ENCODE measurements at regions of chr6 and their contacts with region 1.

Region 1: GRCh38 chr6:13336553-13336952 is 8.2 kb upstream of the TBC1D7 start:
- DNase-seq: peak; percentile 73 to 82
- H3K4me3 ChIP-seq: no peak overlapping the region
- H3K4me3 Mint-ChIP-seq: no peak overlapping the region
- H3K27ac Mint-ChIP-seq: no peak overlapping the region
- H3K4me1 ChIP-seq: peaks cover 6% of the 10 kb centered on the region; the same call in 1 of the 2 replicates
- H3K4me1 Mint-ChIP-seq: peaks cover 9% of the 10 kb centered on the region
- H3K27me3 ChIP-seq: no peaks in the 10 kb centered on the region
- H3K27me3 Mint-ChIP-seq: no peaks in the 10 kb centered on the region
- CTCF ChIP-seq: peak; percentile 77 to 88

Region 2: DNA sequence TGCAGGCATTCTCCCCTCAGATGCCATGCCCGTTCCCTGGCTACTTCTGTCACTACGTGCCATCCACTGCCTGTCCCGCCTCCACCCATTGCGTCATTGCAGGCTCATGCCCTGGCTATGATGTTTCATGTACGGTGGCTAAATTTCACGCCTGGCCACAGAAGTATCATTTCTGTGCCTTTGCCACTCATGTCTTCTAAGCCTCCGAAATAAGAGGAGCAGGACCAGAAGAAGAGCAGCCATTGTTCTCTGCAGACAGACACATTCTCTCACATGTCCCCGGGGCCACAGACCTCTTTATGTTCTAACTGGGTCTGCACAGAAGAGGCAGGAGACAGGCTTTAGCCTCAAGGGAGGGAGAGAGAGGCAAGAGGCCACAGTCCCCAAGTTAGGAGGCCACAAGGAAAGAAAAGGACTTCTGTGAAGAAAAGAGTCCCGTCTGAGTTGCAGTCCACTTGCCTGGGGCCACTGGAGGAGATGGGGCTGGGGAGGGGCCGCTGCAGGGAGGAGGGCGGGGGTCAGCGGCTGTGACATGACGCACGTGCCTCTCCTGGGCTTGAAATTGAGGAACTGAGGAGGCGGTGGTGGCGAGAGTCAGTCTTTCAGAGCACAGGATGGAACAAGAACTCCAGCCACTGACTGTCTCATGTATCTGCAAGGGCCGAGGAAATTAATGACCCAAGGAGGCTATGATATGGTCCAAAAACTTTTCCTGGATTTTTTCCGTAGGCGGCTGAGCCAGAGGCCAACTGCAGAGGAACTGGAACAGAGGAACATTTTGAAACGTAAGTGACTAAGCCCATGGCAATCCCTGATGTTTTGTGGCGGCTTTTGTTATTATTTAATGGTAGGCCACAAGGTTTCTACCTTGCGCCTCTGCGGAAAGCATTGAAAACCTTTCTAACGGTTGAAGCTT is 64.2 kb before region 1 on chr6:
- CTCF ChIA-PET with region 1: no interaction called
- POLR2A ChIA-PET with region 1: no interaction called
- intact Hi-C with region 1: no loop called
- DNase-seq: no peak
- H3K4me3 ChIP-seq: no peak overlapping the region
- H3K4me3 Mint-ChIP-seq: peak overlapping the region; percentile 6
- H3K27ac Mint-ChIP-seq: no peak overlapping the region
- H3K4me1 ChIP-seq: peaks cover 47% of the 10 kb centered on the region
- H3K4me1 Mint-ChIP-seq: peaks cover 35% of the 10 kb centered on the region
- H3K27me3 ChIP-seq: no peaks in the 10 kb centered on the region
- H3K27me3 Mint-ChIP-seq: no peaks in the 10 kb centered on the region
- CTCF ChIP-seq: no peak

Region 3: GRCh38 chr6:13538084-13538483 is 201.5 kb after region 1 on chr6:
- CTCF ChIA-PET with region 1: no interaction called
- POLR2A ChIA-PET with region 1: no interaction called
- intact Hi-C with region 1: loop called (anchors 1 kb)
- DNase-seq: peak in 1 of 2 experiments; percentile 23
- H3K4me3 ChIP-seq: no peak overlapping the region
- H3K4me3 Mint-ChIP-seq: no peak overlapping the region
- H3K27ac Mint-ChIP-seq: no peak overlapping the region
- H3K4me1 ChIP-seq: no peaks in the 10 kb centered on the region
- H3K4me1 Mint-ChIP-seq: no peaks in the 10 kb centered on the region
- H3K27me3 ChIP-seq: no peaks in the 10 kb centered on the region
- H3K27me3 Mint-ChIP-seq: no peaks in the 10 kb centered on the region
- CTCF ChIP-seq: peak; percentile 18 to 27

Region 4: GRCh38 chr6:13614926-13615798 is 278.6 kb after region 1 on chr6 and contains the start of gene NOL7:
- CTCF ChIA-PET with region 1: no interaction called
- POLR2A ChIA-PET with region 1: no interaction called
- intact Hi-C with region 1: loop called (anchors 1 kb)
- DNase-seq: peak; percentile 97 to 98
- H3K4me3 ChIP-seq: peak within 1 kb of the TSS; percentile 87
- H3K4me3 Mint-ChIP-seq: peak within 1 kb of the TSS; percentile 100
- H3K27ac Mint-ChIP-seq: peak within 1 kb of the TSS; percentile 98
- H3K4me1 ChIP-seq: no peaks in the 10 kb centered on the region; the same call in 1 of the 2 replicates
- H3K4me1 Mint-ChIP-seq: peaks cover 7% of the 10 kb centered on the region
- H3K27me3 ChIP-seq: no peaks in the 10 kb centered on the region
- H3K27me3 Mint-ChIP-seq: no peaks in the 10 kb centered on the region
- CTCF ChIP-seq: peak; percentile 70 to 91
- total RNA-seq, gene NOL7: 85.4 and 92.9 TPM in 2 replicates

Region 5: GRCh38 chr6:14066782-14067406 is 730.3 kb after region 1 on chr6:
- CTCF ChIA-PET with region 1: no interaction called
- POLR2A ChIA-PET with region 1: no interaction called
- intact Hi-C with region 1: loop called (anchors 1 kb)
- DNase-seq: peak in 1 of 2 experiments; percentile 51
- H3K4me3 ChIP-seq: no peak overlapping the region
- H3K4me3 Mint-ChIP-seq: no peak overlapping the region
- H3K27ac Mint-ChIP-seq: no peak overlapping the region
- H3K4me1 ChIP-seq: no peaks in the 10 kb centered on the region
- H3K4me1 Mint-ChIP-seq: peaks cover 7% of the 10 kb centered on the region
- H3K27me3 ChIP-seq: no peaks in the 10 kb centered on the region
- H3K27me3 Mint-ChIP-seq: peaks cover 3% of the 10 kb centered on the region
- CTCF ChIP-seq: peak; percentile 57 to 60

Region 6: GRCh38 chr6:14286144-14286543 is 949.6 kb after region 1 on chr6:
- CTCF ChIA-PET with region 1: no interaction called
- POLR2A ChIA-PET with region 1: no interaction called
- intact Hi-C with region 1: no loop called
- DNase-seq: no peak
- H3K4me3 ChIP-seq: no peak overlapping the region
- H3K4me3 Mint-ChIP-seq: no peak overlapping the region
- H3K27ac Mint-ChIP-seq: no peak overlapping the region
- H3K4me1 ChIP-seq: no peaks in the 10 kb centered on the region; the same call in 1 of the 2 replicates
- H3K4me1 Mint-ChIP-seq: peaks cover 6% of the 10 kb centered on the region
- H3K27me3 ChIP-seq: no peaks in the 10 kb centered on the region
- H3K27me3 Mint-ChIP-seq: no peaks in the 10 kb centered on the region
- CTCF ChIP-seq: no peak